ENCODE measurements at regions of chr6 and their contacts with region 1.

Region 1: DNA sequence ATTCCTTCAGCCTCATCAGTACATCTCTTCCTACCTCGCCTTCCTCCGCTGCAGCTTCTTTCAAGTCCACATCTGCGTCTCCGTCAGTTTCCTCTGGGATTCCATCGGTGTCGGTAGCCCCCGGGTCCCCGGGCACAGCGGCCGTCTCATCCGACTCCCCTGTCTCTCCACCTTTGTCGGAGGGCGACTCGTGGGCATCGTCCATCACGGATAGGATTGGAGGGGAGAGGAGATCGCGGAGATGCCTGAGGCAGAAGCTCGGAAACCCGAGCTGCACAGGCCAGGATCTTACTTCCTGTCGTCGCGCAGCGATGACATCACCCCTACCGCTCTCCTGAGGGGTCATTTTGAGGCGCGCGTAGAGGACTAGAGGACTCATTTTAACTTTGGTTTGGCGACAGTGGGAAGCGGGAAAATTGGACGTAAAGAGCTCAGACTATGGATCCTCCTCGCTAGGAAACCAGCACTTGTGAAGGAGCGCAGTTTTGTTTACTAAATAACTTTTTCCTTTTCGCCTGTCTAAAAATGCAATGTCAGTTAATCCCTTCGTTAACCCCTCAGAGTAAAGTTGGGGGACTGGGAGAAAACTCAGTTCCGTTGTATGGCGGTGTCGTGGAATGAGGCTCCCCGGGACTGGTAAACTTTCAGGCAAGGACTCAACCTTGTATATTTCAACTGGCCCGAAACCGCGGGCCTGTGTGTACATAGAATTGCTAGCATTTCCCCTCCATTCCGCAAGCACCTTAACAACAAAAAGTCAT is at the start of gene TAF11:
- DNase-seq: peak; percentile 94 to 96
- H3K4me3 ChIP-seq: peak within 1 kb of the TSS; percentile 30 to 91 (median 79)
- H3K27ac ChIP-seq: peak within 1 kb of the TSS; percentile 31 to 87 (median 66)
- H3K4me1 ChIP-seq: peaks cover 19 to 62% of the 10 kb centered on the region in 2 donors
- H3K27me3 ChIP-seq: no peaks in the 10 kb centered on the region
- CTCF ChIP-seq: peak in 1 of 6 experiments; percentile 12
- POLR2A ChIP-seq: peak in 1 of 2 donors; percentile 75
- total RNA-seq, gene TAF11: 12.8 to 32.2 (median 20.2) TPM

Region 2: DNA sequence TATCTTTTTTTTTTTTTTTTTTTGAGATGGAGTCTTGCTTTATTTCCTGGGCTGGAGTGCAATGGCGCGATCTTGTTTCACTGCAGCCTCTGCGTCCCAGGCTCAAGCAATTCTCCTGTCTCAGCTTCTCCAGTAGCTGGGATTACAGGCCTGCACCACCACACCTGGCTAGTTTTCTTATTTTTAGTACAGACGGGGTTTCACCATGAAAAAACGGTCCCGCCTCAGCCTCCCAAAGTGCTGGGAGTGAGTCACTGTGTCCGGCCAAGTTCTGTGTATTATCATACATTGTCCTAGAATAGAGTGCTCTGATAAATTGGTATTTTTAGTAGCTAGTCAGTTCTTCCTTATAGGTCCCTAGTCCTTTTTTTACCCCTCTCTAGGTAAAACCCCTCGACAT is 127.8 kb before region 1 on chr6:
- intact Hi-C with region 1: loop called (anchors 10 kb)
- DNase-seq: no peak
- H3K4me3 ChIP-seq: no peak overlapping the region
- H3K27ac ChIP-seq: no peak overlapping the region
- H3K4me1 ChIP-seq: peaks cover 7% of the 10 kb centered on the region in 2 donors
- H3K27me3 ChIP-seq: no peaks in the 10 kb centered on the region
- CTCF ChIP-seq: no peak
- POLR2A ChIP-seq: no peak

Region 3: GRCh38 chr6:34791701-34792235 is 96.2 kb before region 1 on chr6 and contains the start of gene BLTP3A:
- intact Hi-C with region 1: loop called (anchors 5 kb)
- DNase-seq: peak; percentile 71 to 76
- H3K4me3 ChIP-seq: peak within 1 kb of the TSS; percentile 82 to 90 (median 86)
- H3K27ac ChIP-seq: peak within 1 kb of the TSS; percentile 89 to 92 (median 89)
- H3K4me1 ChIP-seq: peaks cover 0 to 20% of the 10 kb centered on the region in 2 donors
- H3K27me3 ChIP-seq: no peaks in the 10 kb centered on the region
- CTCF ChIP-seq: peak in 2 of 6 experiments; percentile 8 to 31
- POLR2A ChIP-seq: peak; percentile 6 to 79
- total RNA-seq, gene BLTP3A: 12.6 to 19.5 (median 16.1) TPM

Region 4: DNA sequence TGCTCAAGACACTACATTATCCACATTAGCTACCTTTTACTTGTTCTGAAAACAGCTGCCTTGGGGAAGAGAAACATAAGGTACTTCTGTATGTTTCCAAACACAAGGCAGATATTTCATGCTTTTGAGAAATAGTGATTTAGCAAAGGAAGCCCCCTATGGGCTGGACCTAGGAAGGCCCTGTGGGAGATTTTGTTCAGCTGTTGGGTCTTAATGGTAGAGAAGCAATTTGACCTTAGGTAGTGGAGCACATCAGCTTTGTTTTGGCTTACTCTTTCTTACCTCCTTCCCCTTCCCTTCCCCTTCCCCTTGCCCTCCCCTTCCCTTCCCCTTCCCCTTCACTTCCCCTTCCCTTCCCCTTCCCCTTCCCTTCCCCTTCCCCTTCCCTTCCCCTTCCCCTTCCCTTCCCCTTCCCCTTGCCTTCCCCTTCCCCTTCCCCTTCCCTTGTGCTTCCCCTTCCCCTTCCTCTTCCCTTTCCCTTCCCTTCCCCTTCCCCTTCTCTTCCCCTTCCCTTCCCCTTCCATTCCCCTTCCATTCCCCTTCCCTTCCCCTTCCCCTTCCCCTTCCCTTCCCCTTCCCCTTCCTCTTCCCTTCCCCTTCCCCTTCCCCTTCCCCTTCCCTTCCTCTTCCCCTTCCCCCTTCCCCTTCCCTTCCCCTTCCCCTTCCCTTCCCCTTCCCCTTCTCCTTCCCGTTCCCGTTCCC is 85.8 kb after region 1 on chr6:
- intact Hi-C with region 1: no loop called
- DNase-seq: no peak
- H3K4me3 ChIP-seq: no peak overlapping the region
- H3K27ac ChIP-seq: no peak overlapping the region
- H3K4me1 ChIP-seq: no peaks in the 10 kb centered on the region
- H3K27me3 ChIP-seq: no peaks in the 10 kb centered on the region
- CTCF ChIP-seq: no peak
- POLR2A ChIP-seq: no peak

Region 5: GRCh38 chr6:35034411-35035191 is 146.7 kb after region 1 on chr6:
- intact Hi-C with region 1: no loop called
- DNase-seq: peak; percentile 89
- H3K4me3 ChIP-seq: no peak overlapping the region
- H3K27ac ChIP-seq: peak overlapping the region; percentile 79 to 87 (median 86)
- H3K4me1 ChIP-seq: peaks cover 46 to 74% of the 10 kb centered on the region in 2 donors
- H3K27me3 ChIP-seq: no peaks in the 10 kb centered on the region
- CTCF ChIP-seq: no peak
- POLR2A ChIP-seq: no peak